CD4-positive, alpha-beta memory T cell (primary cell): ENCODE measurements at regions of chr15 and their contacts with region 1.

Region 1: DNA sequence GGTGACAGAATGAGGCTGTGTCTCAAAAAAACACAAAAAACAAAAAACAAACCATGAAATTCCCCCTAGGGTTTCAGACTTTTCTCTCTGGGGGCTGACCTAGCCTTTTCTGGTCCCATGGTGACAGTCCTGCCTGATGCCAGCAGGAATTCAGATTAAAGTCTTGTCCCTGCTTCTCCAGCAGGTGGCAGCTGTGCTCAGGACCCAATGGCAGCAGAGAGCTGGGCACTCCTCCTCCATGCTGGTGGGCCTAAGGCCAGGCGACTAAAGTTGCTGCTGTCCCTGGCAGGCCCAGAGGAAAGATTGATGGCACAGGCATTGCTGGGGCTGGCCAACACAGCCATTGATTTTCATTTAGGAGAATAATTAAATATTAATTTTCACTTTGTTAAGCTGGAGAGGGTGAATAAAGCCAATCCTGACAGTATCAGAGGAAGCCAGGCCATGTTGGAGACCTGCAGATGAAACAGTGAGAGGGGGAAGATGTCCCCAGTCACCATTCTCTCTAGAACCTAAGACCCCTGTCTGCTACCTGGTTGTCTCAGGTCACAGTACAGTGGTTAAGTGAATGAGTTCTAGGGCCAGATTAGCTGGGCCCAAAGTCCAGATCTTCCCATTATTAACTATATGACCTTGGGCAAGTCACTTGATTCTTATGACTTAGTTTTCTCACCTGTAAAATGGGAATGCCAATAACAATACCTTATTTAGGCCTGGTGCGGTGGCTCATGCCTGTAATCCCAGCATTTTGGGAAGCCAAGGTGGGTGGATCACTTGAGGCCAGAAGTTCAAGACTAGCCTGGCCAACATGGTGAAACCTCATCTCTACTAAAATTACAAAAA is 7.1 kb downstream of the CELF6 start:
- DNase-seq: peak; percentile 50 to 57 (median 53)
- H3K4me3 ChIP-seq: no peak overlapping the region
- H3K4me3 Mint-ChIP-seq: no peak overlapping the region
- H3K27ac ChIP-seq: no peak overlapping the region
- H3K27ac Mint-ChIP-seq: peak overlapping the region in 2 of 7 donors; percentile 23 to 45
- H3K4me1 ChIP-seq: no peaks in the 10 kb centered on the region
- H3K4me1 Mint-ChIP-seq: peaks cover 0 to 8% (median 3%) of the 10 kb centered on the region in 4 donors
- H3K27me3 ChIP-seq: no peaks in the 10 kb centered on the region
- H3K27me3 Mint-ChIP-seq: no peaks in the 10 kb centered on the region

Region 2: DNA sequence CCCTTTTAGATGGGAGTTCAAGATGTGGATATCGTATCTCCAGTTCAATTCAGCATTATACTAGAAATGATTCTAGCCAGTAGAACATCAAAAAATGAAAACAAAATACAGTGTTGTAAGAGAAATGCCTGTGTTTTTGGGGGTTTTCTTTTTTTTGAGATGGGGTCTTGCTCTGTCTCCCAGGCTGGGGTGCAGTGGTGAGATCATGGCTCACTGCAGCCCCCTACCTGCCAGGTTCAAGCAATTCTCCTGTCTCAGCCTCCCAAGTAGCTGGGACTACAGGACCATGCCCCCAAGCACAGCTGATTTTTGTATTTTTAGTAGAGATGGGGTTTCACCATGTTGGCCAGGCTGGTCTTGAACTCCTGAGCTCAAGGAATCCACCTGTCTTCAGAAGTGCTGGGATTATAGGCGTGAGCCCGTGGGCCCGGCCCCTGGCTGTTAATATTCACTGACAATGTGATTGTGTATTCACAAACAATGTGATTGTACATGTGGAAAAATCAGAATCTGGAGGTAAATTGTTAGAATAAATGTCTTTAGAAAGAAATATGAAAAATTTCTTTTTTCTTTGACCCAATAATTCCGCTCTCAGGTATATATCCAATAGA is 220.3 kb after region 1 on chr15:
- CTCF ChIA-PET with region 1: interaction called, 70 read pairs
- POLR2A ChIA-PET with region 1: no interaction called
- intact Hi-C with region 1: loop called (anchors 1 kb)
- DNase-seq: peak in 4 of 5 donors; percentile 22 to 29 (median 28)
- H3K4me3 ChIP-seq: no peak overlapping the region
- H3K4me3 Mint-ChIP-seq: peak overlapping the region in 1 of 8 donors; percentile 46
- H3K27ac ChIP-seq: no peak overlapping the region
- H3K27ac Mint-ChIP-seq: peak overlapping the region in 1 of 7 donors; percentile 69
- H3K4me1 ChIP-seq: peaks cover 37% of the 10 kb centered on the region
- H3K4me1 Mint-ChIP-seq: peaks cover 33 to 78% (median 49%) of the 10 kb centered on the region in 4 donors
- H3K27me3 ChIP-seq: no peaks in the 10 kb centered on the region
- H3K27me3 Mint-ChIP-seq: no peaks in the 10 kb centered on the region

Region 3: GRCh38 chr15:72685925-72686794 is 373.3 kb after region 1 on chr15 and contains the starts of genes BBS4 and HIGD2B:
- CTCF ChIA-PET with region 1: no interaction called
- POLR2A ChIA-PET with region 1: no interaction called
- intact Hi-C with region 1: loop called (anchors 10 kb)
- DNase-seq: peak; percentile 81 to 86 (median 83)
- H3K4me3 ChIP-seq: peak within 1 kb of the TSS; percentile 95 to 97
- H3K4me3 Mint-ChIP-seq: peak within 1 kb of the TSS; percentile 94 to 99 (median 98)
- H3K27ac ChIP-seq: peak within 1 kb of the TSS; percentile 76
- H3K27ac Mint-ChIP-seq: peak within 1 kb of the TSS; percentile 88 to 99 (median 97)
- H3K4me1 ChIP-seq: peaks cover 15% of the 10 kb centered on the region
- H3K4me1 Mint-ChIP-seq: peaks cover 10 to 21% (median 16%) of the 10 kb centered on the region in 4 donors
- H3K27me3 ChIP-seq: no peaks in the 10 kb centered on the region
- H3K27me3 Mint-ChIP-seq: no peaks in the 10 kb centered on the region
- total RNA-seq, gene BBS4: 19.1 to 22.2 TPM
- total RNA-seq, gene HIGD2B: 0.39 to 0.41 TPM